Endothelial cell of umbilical vein (primary cell): ENCODE measurements at regions of chr14 and their contacts with region 1.

Region 1: GRCh38 chr14:41137741-41138140 is 468.9 kb upstream of the LRFN5 start:
- DNase-seq: no peak
- H3K4me3 ChIP-seq: no peak overlapping the region
- H3K27ac ChIP-seq: no peak overlapping the region
- H3K4me1 ChIP-seq: no peaks in the 10 kb centered on the region
- H3K27me3 ChIP-seq: no peaks in the 10 kb centered on the region
- CTCF ChIP-seq: no peak
- POLR2A ChIP-seq: no peak

Region 2: GRCh38 chr14:40955131-40955505 is 182.6 kb before region 1 on chr14:
- CTCF ChIA-PET with region 1: no interaction called
- POLR2A ChIA-PET with region 1: no interaction called
- dilution Hi-C with region 1: no loop called
- intact Hi-C with region 1: no loop called
- DNase-seq: no peak
- H3K4me3 ChIP-seq: no peak overlapping the region
- H3K27ac ChIP-seq: no peak overlapping the region
- H3K4me1 ChIP-seq: no peaks in the 10 kb centered on the region
- H3K27me3 ChIP-seq: no peaks in the 10 kb centered on the region
- CTCF ChIP-seq: no peak
- POLR2A ChIP-seq: no peak

Region 3: DNA sequence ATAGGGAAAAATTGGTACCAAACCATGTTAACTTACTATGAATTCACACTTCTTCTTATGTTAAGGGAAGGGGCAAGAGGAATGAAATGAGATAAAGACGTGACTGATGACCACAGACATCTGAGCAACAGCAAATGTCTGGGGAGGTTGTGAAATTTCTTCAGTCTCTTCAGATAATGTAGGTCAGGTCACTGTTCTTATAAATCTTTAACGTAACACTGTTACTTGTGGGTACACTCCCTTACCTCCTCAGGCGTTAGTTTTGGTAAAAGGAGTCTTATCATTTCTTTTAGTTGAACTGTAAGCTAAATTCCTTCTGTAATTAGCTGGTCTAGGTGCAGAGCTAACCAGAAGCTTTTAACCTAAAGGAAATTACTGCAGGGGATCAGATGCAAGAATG is 64.0 kb after region 1 on chr14:
- CTCF ChIA-PET with region 1: no interaction called
- POLR2A ChIA-PET with region 1: no interaction called
- dilution Hi-C with region 1: no loop called
- intact Hi-C with region 1: loop called (anchors 2 kb)
- DNase-seq: no peak
- H3K4me3 ChIP-seq: no peak overlapping the region
- H3K27ac ChIP-seq: no peak overlapping the region
- H3K4me1 ChIP-seq: no peaks in the 10 kb centered on the region
- H3K27me3 ChIP-seq: no peaks in the 10 kb centered on the region
- CTCF ChIP-seq: no peak
- POLR2A ChIP-seq: no peak